ENCODE measurements at regions of chrX and their contacts with region 1.

Region 1: DNA sequence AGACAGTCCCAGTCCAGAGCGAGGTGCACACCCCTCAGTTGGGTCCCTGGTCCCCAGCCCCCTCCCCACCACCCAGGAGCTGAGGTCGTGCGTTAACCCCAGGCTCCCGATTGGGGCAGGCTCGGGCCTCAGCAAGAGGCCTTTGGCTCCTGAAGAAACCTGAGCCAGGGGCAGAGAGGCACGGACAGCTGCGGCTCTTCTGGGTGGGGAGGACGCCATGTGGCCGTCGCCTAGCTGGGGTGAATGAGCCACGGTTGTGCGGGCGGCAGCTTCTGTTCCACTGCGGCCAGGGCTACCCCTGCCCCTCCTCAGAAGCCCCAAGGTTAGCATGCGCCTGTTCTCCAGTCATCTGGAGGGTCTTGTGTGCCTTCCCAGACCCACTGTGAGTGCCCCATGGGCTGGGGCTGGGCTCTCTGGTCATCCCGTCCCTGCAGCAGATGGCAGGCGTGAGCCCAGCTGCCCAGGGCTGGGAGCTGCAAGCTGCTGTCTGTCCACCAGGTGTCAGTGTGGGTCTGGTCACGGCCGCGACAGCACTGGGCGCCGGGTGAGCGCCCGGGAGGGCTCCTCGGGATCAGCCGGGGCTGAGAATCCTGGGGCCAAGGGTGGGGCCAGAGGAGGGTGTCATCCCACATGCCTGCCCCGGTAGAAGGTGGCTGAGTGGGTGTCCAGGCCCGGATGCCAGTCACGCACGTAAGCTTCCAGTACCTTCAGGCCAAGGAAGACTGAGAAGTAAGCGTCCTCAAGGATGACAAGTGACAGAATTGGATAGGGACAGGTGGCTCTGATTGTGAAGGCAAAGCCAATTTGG is 21.9 kb downstream of the ATP2B3 start:
- DNase-seq: peak; percentile 26 to 70 (median 45)
- ATAC-seq: peak; percentile 90
- H3K4me3 ChIP-seq: no peak overlapping the region
- H3K4me3 Mint-ChIP-seq: no peak overlapping the region
- H3K27ac ChIP-seq: no peak overlapping the region
- H3K27ac Mint-ChIP-seq: no peak overlapping the region
- H3K4me1 ChIP-seq: no peaks in the 10 kb centered on the region
- H3K4me1 Mint-ChIP-seq: peaks cover 0 to 2% (median 0%) of the 10 kb centered on the region in 7 donors
- H3K27me3 ChIP-seq: no peaks in the 10 kb centered on the region
- H3K27me3 Mint-ChIP-seq: peaks cover 0 to 3% (median 0%) of the 10 kb centered on the region in 5 donors

Region 2: DNA sequence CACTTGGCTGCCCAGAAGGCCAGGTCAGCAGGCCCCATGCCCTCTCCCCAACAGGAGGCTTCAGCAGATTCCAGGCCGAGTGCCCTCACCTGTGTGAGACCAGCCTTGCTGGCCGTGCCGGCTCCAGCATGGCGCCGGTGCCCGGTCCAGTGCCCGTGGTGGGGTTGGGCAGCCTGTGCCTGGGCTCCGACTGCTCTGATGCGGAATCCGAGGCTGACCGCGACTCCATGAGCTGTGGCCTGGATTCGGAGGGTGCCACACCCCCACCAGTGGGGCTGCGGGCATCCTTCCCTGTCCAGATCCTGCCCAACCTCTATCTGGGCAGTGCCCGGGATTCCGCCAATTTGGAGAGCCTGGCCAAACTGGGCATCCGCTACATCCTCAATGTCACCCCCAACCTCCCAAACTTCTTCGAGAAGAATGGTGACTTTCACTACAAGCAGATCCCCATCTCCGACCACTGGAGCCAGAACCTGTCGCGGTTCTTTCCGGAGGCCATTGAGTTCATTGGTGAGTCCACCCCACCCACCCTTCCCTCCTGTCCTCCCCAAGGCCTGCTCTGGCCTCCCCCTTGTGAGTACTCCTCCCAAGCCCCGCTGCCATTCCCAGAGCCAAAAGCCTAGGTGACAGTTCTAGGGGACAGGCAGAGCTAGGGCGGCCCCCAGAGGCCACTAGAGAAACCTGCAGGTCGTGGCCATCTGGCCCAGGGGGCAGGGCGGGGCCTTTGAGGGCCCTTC is 110.0 kb after region 1 on chrX:
- CTCF ChIA-PET with region 1: no interaction called
- POLR2A ChIA-PET with region 1: no interaction called
- intact Hi-C with region 1: loop called (anchors 1 to 5 kb)
- DNase-seq: peak in 4 of 9 donors; percentile 19 to 33 (median 30)
- ATAC-seq: peak; percentile 83
- H3K4me3 ChIP-seq: no peak overlapping the region
- H3K4me3 Mint-ChIP-seq: peak overlapping the region in 1 of 10 donors; percentile 51
- H3K27ac ChIP-seq: no peak overlapping the region
- H3K27ac Mint-ChIP-seq: no peak overlapping the region
- H3K4me1 ChIP-seq: no peaks in the 10 kb centered on the region
- H3K4me1 Mint-ChIP-seq: peaks cover 0 to 4% (median 0%) of the 10 kb centered on the region in 7 donors
- H3K27me3 ChIP-seq: peaks cover 0 to 4% of the 10 kb centered on the region in 2 donors
- H3K27me3 Mint-ChIP-seq: peaks cover 0 to 36% (median 5%) of the 10 kb centered on the region in 5 donors

Region 3: GRCh38 chrX:153667956-153668396 is 128.6 kb after region 1 on chrX:
- CTCF ChIA-PET with region 1: interaction called, 22 read pairs
- POLR2A ChIA-PET with region 1: interaction called, 3 read pairs
- intact Hi-C with region 1: loop called (anchors 1 kb)
- DNase-seq: peak; percentile 51 to 78 (median 65)
- ATAC-seq: peak; percentile 93
- H3K4me3 ChIP-seq: no peak overlapping the region
- H3K4me3 Mint-ChIP-seq: peak overlapping the region; percentile 53 to 82 (median 74)
- H3K27ac ChIP-seq: no peak overlapping the region
- H3K27ac Mint-ChIP-seq: peak overlapping the region in 4 of 9 donors; percentile 2 to 51 (median 37)
- H3K4me1 ChIP-seq: no peaks in the 10 kb centered on the region
- H3K4me1 Mint-ChIP-seq: peaks cover 5 to 10% (median 7%) of the 10 kb centered on the region in 7 donors
- H3K27me3 ChIP-seq: no peaks in the 10 kb centered on the region
- H3K27me3 Mint-ChIP-seq: peaks cover 0 to 28% (median 7%) of the 10 kb centered on the region in 5 donors